Thyroid gland (tissue), 4 donors: ENCODE measurements at regions of chr2 and their contacts with region 1.

Region 1: GRCh38 chr2:26503231-26503880 is 25.4 kb upstream of the OTOF start:
- DNase-seq: peak; percentile 83 to 88
- H3K4me3 ChIP-seq: peak overlapping the region in 1 of 3 donors; percentile 32
- H3K27ac ChIP-seq: peak overlapping the region in 1 of 3 donors; percentile 28
- H3K4me1 ChIP-seq: peaks cover 10 to 12% of the 10 kb centered on the region in 2 donors
- H3K27me3 ChIP-seq: no peaks in the 10 kb centered on the region
- CTCF ChIP-seq: peak; percentile 72 to 95 (median 91)
- POLR2A ChIP-seq: no peak

Region 2: GRCh38 chr2:26577434-26578112 is 74.2 kb after region 1 on chr2:
- intact Hi-C with region 1: loop called (anchors 5 kb)
- DNase-seq: peak; percentile 68 to 73
- H3K4me3 ChIP-seq: no peak overlapping the region
- H3K27ac ChIP-seq: no peak overlapping the region
- H3K4me1 ChIP-seq: no peaks in the 10 kb centered on the region
- H3K27me3 ChIP-seq: no peaks in the 10 kb centered on the region
- CTCF ChIP-seq: peak; percentile 94 to 98 (median 96)
- POLR2A ChIP-seq: no peak